ENCODE measurements at regions of chr9 and their contacts with region 1.

Region 1: DNA sequence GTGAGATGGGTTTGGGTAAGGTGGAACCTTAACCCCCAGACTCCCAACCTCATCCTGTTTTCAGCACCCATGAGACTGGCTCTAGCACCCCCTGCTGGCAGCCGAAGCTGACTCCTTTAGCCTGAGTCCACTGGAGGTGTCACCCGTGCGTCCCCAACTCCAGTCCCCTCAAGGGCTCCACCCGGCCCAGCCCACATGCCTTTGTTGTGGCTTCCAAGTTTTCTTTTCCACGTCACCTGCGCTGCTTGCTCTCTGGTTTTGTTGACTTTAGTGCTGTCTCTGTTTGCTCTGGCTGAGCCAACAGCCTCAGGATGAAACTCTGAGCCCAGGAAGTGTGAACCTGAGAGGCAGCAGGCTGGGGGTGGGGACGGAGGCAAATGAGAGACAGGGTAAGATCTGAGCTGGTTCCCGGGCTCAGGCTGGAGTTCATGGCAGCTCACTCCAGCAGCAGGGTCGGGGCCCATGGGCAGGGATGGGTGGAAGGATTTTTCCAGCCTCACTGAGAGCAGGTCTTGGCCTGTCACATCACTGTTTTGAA is 13.2 kb upstream of the AQP7 start:
- DNase-seq: peak; percentile 92 to 94
- ATAC-seq: peak; percentile 92

Region 2: GRCh38 chr9:33101108-33101951 is 314.2 kb before region 1 on chr9:
- intact Hi-C with region 1: no loop called
- DNase-seq: no peak
- ATAC-seq: no peak

Region 3: GRCh38 chr9:33366979-33367480 is 48.5 kb before region 1 on chr9:
- intact Hi-C with region 1: loop called in 1 of 2 experiments (anchors 5 kb)
- DNase-seq: no peak
- ATAC-seq: no peak

Region 4: DNA sequence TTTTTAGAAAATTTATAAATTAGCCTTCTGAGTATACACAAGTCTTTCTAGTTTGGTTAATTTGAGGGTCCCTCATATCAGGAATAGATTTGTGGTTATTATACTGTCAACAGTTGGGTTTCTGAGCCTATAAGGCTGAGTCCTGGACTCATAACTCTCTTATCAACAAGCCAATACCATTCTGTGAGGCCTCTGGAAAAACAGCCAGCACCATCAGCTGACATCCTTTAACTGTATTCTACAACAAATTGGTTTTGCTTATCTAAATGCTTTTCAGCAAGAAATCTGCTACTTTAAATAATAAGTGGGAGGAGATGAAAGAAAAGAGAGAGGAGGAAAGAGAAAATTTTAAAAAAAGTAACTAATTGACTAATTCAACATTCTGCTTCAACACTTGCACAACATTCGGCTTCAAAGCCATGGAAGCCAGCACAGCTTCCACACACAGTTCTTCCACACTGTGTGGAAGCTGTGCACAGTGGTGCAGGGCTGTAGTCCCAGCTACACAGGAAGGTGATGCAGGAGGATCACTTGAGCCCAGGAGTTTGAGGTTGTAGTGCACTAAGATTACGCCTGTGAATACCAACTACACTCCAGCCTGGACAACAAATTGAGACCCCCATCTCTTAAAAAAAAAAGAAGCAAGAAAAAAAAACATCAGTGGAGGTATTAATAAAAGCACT is 548.7 kb after region 1 on chr9:
- intact Hi-C with region 1: no loop called
- DNase-seq: no peak
- ATAC-seq: no peak